ENCODE measurements at regions of chr3 and their contacts with region 1.

Region 1: GRCh38 chr3:183468424-183468823 is 40.0 kb upstream of the MCF2L2 start:
- DNase-seq: no peak
- H3K4me3 ChIP-seq: no peak overlapping the region
- H3K27ac ChIP-seq: no peak overlapping the region
- H3K4me1 ChIP-seq: peaks cover 6% of the 10 kb centered on the region
- H3K27me3 ChIP-seq: no peaks in the 10 kb centered on the region
- CTCF ChIP-seq: no peak
- POLR2A ChIP-seq: no peak

Region 2: GRCh38 chr3:182937293-182938051 is 531.0 kb before region 1 on chr3:
- CTCF ChIA-PET with region 1: no interaction called
- POLR2A ChIA-PET with region 1: no interaction called
- dilution Hi-C with region 1: no loop called
- intact Hi-C with region 1: no loop called
- DNase-seq: peak; percentile 13
- H3K4me3 ChIP-seq: no peak overlapping the region
- H3K27ac ChIP-seq: no peak overlapping the region
- H3K4me1 ChIP-seq: peaks cover 3% of the 10 kb centered on the region
- H3K27me3 ChIP-seq: no peaks in the 10 kb centered on the region
- CTCF ChIP-seq: no peak
- POLR2A ChIP-seq: no peak

Region 3: DNA sequence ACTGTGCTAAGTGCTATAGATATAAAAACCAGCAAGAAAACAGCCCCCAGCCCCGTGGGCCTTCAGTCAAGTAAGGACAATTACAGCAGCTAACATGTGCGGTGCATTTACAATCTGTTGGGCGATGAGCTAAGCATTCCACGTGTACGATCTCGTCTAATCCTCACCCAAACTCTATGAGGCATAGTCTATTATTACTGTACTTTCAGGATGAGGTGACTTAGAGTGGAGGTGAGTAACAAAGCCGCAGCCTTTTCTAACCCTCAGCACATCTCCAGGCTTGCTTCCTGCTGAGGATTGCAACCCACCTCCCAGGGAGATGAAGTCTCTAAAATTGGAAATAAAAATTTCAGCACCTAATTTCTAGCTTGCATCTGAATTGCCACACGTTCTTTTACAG is 13.2 kb after region 1 on chr3:
- CTCF ChIA-PET with region 1: interaction called, 17 read pairs
- POLR2A ChIA-PET with region 1: no interaction called
- dilution Hi-C with region 1: no loop called
- intact Hi-C with region 1: no loop called
- DNase-seq: no peak
- H3K4me3 ChIP-seq: no peak overlapping the region
- H3K27ac ChIP-seq: no peak overlapping the region
- H3K4me1 ChIP-seq: no peaks in the 10 kb centered on the region
- H3K27me3 ChIP-seq: no peaks in the 10 kb centered on the region
- CTCF ChIP-seq: no peak
- POLR2A ChIP-seq: no peak

Region 4: DNA sequence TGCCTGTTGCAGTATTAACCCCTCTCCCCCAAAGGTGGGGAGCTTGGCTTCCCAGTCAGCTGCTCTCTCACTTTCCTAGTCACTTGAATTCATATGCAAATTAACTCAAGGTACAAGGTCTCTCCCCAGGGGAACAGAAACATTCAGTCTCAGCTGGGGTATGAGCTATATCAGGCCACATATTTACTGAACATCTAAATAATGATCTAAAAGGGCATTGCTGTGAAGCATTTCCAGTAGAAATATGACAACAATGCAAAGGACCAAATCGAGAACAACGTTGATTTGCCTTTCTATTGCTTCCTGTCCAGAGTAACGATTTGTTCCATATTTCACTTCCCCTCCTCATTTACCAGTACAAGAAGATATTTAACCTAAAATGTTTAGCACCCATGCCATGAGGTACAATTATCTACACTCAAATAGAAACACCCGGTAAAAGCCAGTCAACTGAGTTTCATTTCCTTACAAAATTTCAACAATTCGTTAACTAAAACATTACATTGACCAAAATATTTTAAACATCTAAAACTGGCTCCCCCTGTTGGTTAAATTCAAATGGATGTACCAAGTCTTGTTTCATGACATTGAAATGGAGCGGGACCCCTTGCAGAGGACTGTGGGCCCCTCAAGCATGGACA is 123.6 kb after region 1 on chr3:
- CTCF ChIA-PET with region 1: interaction called, 6 read pairs
- POLR2A ChIA-PET with region 1: no interaction called
- dilution Hi-C with region 1: no loop called
- intact Hi-C with region 1: loop called (anchors 1 kb)
- DNase-seq: peak; percentile 30
- H3K4me3 ChIP-seq: no peak overlapping the region
- H3K27ac ChIP-seq: no peak overlapping the region
- H3K4me1 ChIP-seq: peaks cover 11% of the 10 kb centered on the region
- H3K27me3 ChIP-seq: no peaks in the 10 kb centered on the region
- CTCF ChIP-seq: peak in 1 of 2 donors; percentile 12
- POLR2A ChIP-seq: no peak

Region 5: DNA sequence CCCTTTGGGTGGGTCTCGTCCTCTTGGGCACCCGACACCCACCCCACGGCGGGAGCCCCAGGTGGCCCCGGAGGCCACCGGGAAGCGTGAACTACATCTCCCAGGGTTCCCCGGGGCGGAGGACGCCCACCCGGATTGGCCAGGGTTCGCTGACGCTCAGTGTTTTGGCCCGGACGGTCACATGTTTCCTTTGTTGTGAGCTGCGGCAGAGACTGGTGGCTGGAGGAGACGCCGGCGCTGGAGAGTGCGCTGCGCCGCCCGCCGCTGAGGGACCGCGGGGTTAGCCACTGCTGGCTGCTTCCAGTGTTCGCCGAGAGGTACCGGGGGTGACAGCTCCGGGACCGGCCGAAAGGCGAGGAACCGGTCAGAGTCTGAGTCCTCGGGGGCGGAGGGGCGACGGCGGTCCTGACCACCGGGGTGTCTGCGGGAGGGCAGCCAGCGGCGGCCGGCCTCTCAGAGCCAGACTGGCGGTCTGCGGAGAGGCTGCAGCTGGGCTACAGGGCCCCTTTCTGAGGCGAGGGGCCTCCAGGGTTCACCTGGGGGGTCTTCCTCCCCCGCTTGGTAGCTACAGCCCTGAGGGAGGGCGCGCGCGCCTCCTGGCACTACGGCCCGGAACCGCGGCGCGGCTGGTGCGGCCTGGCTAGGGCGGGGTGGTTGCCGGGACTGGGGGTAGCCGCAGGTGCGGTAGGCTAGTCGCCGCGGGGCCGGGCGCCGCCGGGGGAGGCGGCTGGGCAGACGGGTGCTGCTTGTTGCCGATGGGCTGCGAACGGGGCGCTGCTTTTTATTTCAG is 167.2 kb after region 1 on chr3 and contains the start of gene KLHL24:
- CTCF ChIA-PET with region 1: interaction called, 4 read pairs
- POLR2A ChIA-PET with region 1: no interaction called
- dilution Hi-C with region 1: no loop called
- intact Hi-C with region 1: loop called (anchors 1 kb)
- DNase-seq: peak; percentile 93
- H3K4me3 ChIP-seq: peak within 1 kb of the TSS; percentile 81 to 99 (median 84)
- H3K27ac ChIP-seq: peak within 1 kb of the TSS; percentile 89
- H3K4me1 ChIP-seq: peaks cover 19% of the 10 kb centered on the region
- H3K27me3 ChIP-seq: no peaks in the 10 kb centered on the region
- CTCF ChIP-seq: no peak
- POLR2A ChIP-seq: peak; percentile 41
- total RNA-seq, gene KLHL24: 45.8 and 46.2 TPM in 2 replicates

Region 6: GRCh38 chr3:183697610-183698317 is 229.3 kb after region 1 on chr3 and contains the start of gene YEATS2:
- CTCF ChIA-PET with region 1: interaction called, 6 read pairs
- POLR2A ChIA-PET with region 1: no interaction called
- dilution Hi-C with region 1: no loop called
- intact Hi-C with region 1: loop called (anchors 1 kb)
- DNase-seq: peak; percentile 66
- H3K4me3 ChIP-seq: peak within 1 kb of the TSS; percentile 59 to 98 (median 86)
- H3K27ac ChIP-seq: peak within 1 kb of the TSS; percentile 73
- H3K4me1 ChIP-seq: peaks cover 15% of the 10 kb centered on the region
- H3K27me3 ChIP-seq: no peaks in the 10 kb centered on the region
- CTCF ChIP-seq: no peak
- POLR2A ChIP-seq: peak; percentile 81
- total RNA-seq, gene YEATS2: 59.1 and 59.9 TPM in 2 replicates

Region 7: GRCh38 chr3:183884427-183885296 is 416.2 kb after region 1 on chr3 and contains the start of gene PARL:
- CTCF ChIA-PET with region 1: interaction called, 5 read pairs
- POLR2A ChIA-PET with region 1: no interaction called
- dilution Hi-C with region 1: no loop called
- intact Hi-C with region 1: loop called (anchors 1 kb)
- DNase-seq: peak; percentile 93
- H3K4me3 ChIP-seq: peak within 1 kb of the TSS; percentile 47 to 93 (median 85)
- H3K27ac ChIP-seq: peak within 1 kb of the TSS; percentile 34
- H3K4me1 ChIP-seq: peaks cover 11% of the 10 kb centered on the region
- H3K27me3 ChIP-seq: no peaks in the 10 kb centered on the region
- CTCF ChIP-seq: peak; percentile 99 to 100
- POLR2A ChIP-seq: peak; percentile 87
- total RNA-seq, gene PARL: 48.1 and 54.1 TPM in 2 replicates

Measured in endothelial cell of umbilical vein (primary cell).